Endothelial cell of umbilical vein (primary cell): ENCODE measurements at regions of chr14 and their contacts with region 1.

Region 1: DNA sequence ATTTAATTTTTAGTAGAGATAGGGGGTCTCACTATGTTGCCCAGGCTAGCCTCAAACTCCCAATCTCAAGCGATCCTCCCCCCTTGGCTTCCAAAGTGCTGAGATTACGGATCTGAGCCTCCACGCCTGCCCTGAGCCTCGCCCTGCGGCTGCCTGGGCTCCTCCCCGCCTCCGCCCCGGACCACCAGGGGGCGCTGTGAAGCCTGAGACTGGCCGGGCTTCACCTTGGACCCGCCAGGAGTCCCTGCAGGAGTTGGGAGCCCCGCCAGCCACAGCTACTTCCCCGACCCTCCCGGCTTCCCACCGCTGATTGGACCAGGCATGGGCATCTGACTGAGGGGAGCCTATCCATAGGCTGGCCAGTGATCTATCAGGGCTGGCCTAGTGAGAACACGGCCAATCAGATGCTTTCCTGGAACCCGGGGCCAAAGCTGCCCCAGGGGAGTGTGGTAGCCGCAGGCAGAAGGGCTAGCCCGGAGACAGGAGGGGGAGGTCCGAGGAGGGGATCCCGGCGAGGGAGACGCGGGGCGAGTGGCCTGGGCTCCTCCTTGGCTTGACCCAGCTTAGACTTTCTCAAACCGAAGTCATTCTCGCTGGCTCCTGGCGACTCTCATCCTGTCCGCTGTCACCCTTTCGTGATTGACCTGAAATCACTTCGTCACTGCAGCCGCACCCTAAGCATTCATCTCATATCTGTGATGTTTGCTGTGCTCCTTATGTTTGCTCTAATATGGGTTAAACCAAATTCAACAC is 15.1 kb upstream of the ANKRD9 start:
- DNase-seq: peak; percentile 98
- H3K4me3 ChIP-seq: peak overlapping the region; percentile 16 to 57 (median 45)
- H3K27ac ChIP-seq: no peak overlapping the region
- H3K4me1 ChIP-seq: peaks cover 28% of the 10 kb centered on the region
- H3K27me3 ChIP-seq: no peaks in the 10 kb centered on the region
- CTCF ChIP-seq: peak; percentile 98 to 100
- POLR2A ChIP-seq: peak; percentile 90

Region 2: DNA sequence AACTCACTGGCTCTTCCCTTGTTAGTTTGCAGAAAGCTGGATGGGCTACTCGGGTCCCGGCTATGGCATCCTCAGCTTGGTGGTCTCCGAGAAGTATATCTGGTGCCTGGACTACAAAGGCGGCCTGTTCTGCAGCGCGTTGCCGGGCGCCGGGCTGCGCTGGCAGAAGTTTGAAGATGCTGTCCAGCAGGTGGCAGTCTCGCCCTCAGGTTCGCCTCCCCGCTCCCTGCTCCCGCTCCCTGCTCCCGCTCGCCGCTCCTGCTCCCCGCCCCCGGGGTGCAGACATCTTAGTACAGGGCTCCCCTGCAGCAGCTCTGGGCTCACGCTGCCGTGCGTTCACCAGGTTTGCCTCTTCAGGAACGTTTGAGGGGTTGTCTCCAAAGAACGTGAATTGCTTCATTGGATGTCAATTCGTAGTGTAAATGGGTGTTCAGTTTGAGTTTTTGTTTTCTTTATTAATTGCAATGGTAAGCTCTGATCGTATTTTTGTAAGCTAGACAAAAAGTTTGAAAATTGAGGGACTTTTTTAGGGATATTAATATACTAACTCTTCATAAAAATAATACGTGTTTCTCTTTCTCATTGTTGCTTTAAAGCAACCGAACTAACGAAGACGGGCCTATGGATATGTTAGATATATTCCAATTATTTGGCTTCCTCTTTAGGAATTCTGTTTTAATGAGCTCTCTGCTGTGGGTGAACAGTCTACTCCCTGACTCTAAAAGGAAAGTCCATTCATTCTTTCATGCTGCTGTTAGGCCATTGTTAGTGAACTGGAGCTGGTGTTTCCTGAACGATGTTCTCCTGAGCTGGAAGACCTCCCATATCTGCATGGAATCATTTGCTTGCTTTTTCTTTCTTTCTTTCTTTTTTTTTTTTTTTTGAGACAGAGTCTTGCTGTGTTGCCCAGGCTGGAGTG is 86.4 kb before region 1 on chr14:
- CTCF ChIA-PET with region 1: interaction called, 12 read pairs
- POLR2A ChIA-PET with region 1: no interaction called
- dilution Hi-C with region 1: no loop called
- intact Hi-C with region 1: no loop called
- DNase-seq: peak; percentile 73
- H3K4me3 ChIP-seq: peak overlapping the region in 1 of 3 experiments; percentile 13
- H3K27ac ChIP-seq: no peak overlapping the region
- H3K4me1 ChIP-seq: peaks cover 2% of the 10 kb centered on the region
- H3K27me3 ChIP-seq: no peaks in the 10 kb centered on the region
- CTCF ChIP-seq: peak; percentile 79 to 84
- POLR2A ChIP-seq: no peak

Region 3: GRCh38 chr14:102472791-102473150 is 51.9 kb before region 1 on chr14:
- CTCF ChIA-PET with region 1: no interaction called
- POLR2A ChIA-PET with region 1: no interaction called
- dilution Hi-C with region 1: no loop called
- intact Hi-C with region 1: no loop called
- DNase-seq: no peak
- H3K4me3 ChIP-seq: no peak overlapping the region
- H3K27ac ChIP-seq: no peak overlapping the region
- H3K4me1 ChIP-seq: no peaks in the 10 kb centered on the region
- H3K27me3 ChIP-seq: no peaks in the 10 kb centered on the region
- CTCF ChIP-seq: no peak
- POLR2A ChIP-seq: no peak

Region 4: GRCh38 chr14:102539580-102540314 is 15.1 kb after region 1 on chr14:
- CTCF ChIA-PET with region 1: interaction called, 10 read pairs
- POLR2A ChIA-PET with region 1: no interaction called
- dilution Hi-C with region 1: no loop called
- intact Hi-C with region 1: no loop called
- DNase-seq: no peak
- H3K4me3 ChIP-seq: no peak overlapping the region
- H3K27ac ChIP-seq: no peak overlapping the region
- H3K4me1 ChIP-seq: no peaks in the 10 kb centered on the region
- H3K27me3 ChIP-seq: peaks cover 6 to 9% of the 10 kb centered on the region in 2 experiments
- CTCF ChIP-seq: no peak
- POLR2A ChIP-seq: no peak

Region 5: GRCh38 chr14:102584871-102585869 is 60.5 kb after region 1 on chr14:
- CTCF ChIA-PET with region 1: interaction called, 10 read pairs
- POLR2A ChIA-PET with region 1: no interaction called
- dilution Hi-C with region 1: no loop called
- intact Hi-C with region 1: no loop called
- DNase-seq: peak; percentile 53
- H3K4me3 ChIP-seq: no peak overlapping the region
- H3K27ac ChIP-seq: peak overlapping the region; percentile 65
- H3K4me1 ChIP-seq: peaks cover 12% of the 10 kb centered on the region
- H3K27me3 ChIP-seq: no peaks in the 10 kb centered on the region
- CTCF ChIP-seq: no peak
- POLR2A ChIP-seq: peak; percentile 70

Region 6: GRCh38 chr14:102655170-102655569 is 130.5 kb after region 1 on chr14:
- CTCF ChIA-PET with region 1: interaction called, 9 read pairs
- POLR2A ChIA-PET with region 1: no interaction called
- dilution Hi-C with region 1: no loop called
- intact Hi-C with region 1: loop called (anchors 10 kb)
- DNase-seq: peak; percentile 92
- H3K4me3 ChIP-seq: peak overlapping the region in 1 of 3 experiments; percentile 51
- H3K27ac ChIP-seq: peak overlapping the region; percentile 97
- H3K4me1 ChIP-seq: peaks cover 20% of the 10 kb centered on the region
- H3K27me3 ChIP-seq: no peaks in the 10 kb centered on the region
- CTCF ChIP-seq: no peak
- POLR2A ChIP-seq: no peak

Region 7: DNA sequence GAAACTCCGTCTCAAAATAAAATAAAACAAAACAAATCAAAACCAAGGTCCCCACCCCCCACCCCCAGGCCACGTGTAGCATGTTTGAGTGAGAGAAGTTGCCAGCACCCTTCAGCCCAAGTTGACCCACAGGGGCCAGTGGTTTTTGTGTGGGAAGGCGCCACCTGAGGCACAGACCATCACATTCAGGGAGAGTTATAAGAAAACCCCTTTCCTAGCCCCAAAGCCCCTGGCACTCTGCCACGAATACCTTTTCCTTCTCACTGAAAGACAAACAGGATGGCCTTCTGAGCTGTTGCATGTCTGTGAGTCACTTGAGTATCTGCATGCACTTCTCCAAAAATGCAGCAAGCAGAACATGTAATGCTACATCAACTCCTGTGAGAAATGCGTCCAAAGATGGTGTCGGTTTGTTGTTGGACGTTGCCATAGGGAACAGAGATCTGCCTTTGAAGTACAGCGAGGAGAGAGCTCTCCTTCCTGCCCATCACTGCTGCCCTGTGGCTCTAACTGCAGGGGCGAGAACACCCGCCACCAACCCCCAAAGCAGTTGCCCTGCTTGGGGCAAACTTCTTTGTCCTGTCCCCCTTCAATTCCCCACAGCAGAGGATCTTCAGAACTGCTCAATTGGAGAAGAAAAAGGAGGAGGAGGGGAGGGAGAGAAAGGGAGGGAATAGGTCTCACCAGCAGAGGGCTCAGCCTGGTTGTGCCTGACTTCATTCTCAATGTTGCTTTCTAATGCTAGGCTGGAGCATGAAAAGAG is 249.9 kb after region 1 on chr14:
- CTCF ChIA-PET with region 1: interaction called, 4 read pairs
- POLR2A ChIA-PET with region 1: no interaction called
- dilution Hi-C with region 1: no loop called
- intact Hi-C with region 1: loop called (anchors 1 kb)
- DNase-seq: peak; percentile 69
- H3K4me3 ChIP-seq: no peak overlapping the region
- H3K27ac ChIP-seq: no peak overlapping the region
- H3K4me1 ChIP-seq: peaks cover 16% of the 10 kb centered on the region
- H3K27me3 ChIP-seq: no peaks in the 10 kb centered on the region
- CTCF ChIP-seq: peak; percentile 66 to 86
- POLR2A ChIP-seq: no peak

Region 8: GRCh38 chr14:102786768-102787167 is 262.1 kb after region 1 on chr14:
- CTCF ChIA-PET with region 1: no interaction called
- POLR2A ChIA-PET with region 1: no interaction called
- dilution Hi-C with region 1: no loop called
- intact Hi-C with region 1: no loop called
- DNase-seq: peak; percentile 36
- H3K4me3 ChIP-seq: no peak overlapping the region
- H3K27ac ChIP-seq: no peak overlapping the region
- H3K4me1 ChIP-seq: peaks cover 6% of the 10 kb centered on the region
- H3K27me3 ChIP-seq: no peaks in the 10 kb centered on the region
- CTCF ChIP-seq: no peak
- POLR2A ChIP-seq: no peak

Region 9: DNA sequence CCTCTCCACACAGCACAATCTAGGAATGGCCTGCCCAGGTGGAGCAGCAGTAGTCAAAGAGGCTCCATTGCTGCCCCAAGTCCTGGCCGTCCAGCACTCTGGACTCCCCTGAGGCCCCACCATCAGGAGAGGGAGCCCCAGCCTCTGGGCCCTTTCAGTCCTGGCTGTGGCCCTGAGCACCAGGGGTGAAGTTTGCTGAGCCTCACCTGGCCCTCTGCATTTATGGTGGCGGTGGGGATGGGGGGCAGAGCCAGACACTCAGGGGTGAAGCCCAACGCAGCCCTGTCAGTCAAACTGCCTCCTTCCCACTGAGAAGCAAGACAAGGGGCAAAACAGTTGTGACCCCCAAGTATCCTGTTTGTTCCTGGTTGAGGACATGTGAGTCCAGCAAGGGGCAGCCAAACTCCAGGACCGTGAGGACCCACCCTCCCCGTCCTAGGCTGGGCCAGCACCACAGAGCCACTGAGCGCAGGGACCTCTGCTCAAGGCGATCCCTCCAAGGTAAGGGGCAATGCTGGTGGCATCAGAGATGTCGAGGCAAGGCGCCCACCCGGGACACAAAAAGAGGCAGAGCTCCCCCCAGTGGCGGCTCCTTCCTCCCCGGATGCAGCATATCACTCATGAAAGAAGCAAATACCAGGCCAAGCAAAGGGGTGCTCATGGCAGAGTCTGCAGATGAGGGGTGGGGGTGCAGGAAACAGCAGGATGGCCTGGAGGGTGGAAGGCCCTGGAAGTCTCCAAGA is 393.0 kb after region 1 on chr14:
- CTCF ChIA-PET with region 1: interaction called, 4 read pairs
- POLR2A ChIA-PET with region 1: no interaction called
- dilution Hi-C with region 1: no loop called
- intact Hi-C with region 1: loop called (anchors 1 kb)
- DNase-seq: peak; percentile 47
- H3K4me3 ChIP-seq: no peak overlapping the region
- H3K27ac ChIP-seq: no peak overlapping the region
- H3K4me1 ChIP-seq: no peaks in the 10 kb centered on the region
- H3K27me3 ChIP-seq: peaks cover 7 to 8% of the 10 kb centered on the region in 2 experiments
- CTCF ChIP-seq: peak; percentile 72 to 78
- POLR2A ChIP-seq: no peak